ENCODE measurements at regions of chr9 and their contacts with region 1.

Region 1: DNA sequence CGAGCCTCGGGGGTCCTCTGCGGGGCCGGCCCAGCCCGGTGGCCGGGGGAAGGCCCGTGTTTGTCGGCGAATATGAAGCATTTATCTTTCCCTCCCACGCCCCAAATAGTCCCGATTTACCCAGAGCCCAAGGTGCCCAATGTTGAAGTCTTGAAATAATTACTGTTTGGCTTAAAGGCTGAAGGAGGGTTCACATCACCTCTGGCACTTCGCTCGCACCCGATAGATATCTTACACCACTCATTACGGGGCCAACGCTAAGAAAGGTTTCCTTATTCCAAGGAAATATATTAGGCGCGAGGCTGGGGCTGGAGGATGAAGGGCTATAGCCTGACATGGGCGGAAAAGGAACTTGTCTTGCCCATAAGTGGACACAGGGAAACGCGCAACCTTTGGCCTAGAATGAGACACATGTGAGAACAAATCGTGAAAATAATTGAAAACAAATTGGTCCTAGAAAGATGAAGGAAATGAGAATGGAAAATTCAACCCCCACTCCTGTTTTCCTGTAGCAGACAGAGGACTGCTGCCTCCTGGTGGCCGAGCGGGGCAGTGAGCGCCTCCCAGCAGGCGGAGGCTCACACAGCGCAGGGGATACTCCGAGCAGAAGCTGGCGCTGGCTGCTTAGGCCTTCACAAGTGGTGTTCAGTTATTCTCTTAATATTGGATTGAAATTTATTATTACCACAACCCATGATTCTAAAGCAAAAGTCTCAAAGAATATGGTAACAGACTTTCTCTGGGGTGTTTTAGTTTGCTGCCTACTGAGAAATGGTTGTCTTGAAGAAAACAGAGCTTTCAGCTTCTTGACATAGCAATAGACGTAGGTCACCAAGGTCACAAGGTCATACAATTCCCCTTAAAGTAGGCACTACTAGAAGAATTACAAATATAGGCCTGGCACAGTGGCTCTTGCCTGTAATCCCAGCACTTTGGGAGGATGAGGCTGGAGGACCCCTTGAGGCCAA is 7.9 kb downstream of the CCL21 start:
- DNase-seq: peak; percentile 93
- ATAC-seq: peak; percentile 95

Region 2: GRCh38 chr9:34384368-34385165 is 317.5 kb before region 1 on chr9:
- intact Hi-C with region 1: no loop called
- DNase-seq: no peak
- ATAC-seq: no peak

Region 3: DNA sequence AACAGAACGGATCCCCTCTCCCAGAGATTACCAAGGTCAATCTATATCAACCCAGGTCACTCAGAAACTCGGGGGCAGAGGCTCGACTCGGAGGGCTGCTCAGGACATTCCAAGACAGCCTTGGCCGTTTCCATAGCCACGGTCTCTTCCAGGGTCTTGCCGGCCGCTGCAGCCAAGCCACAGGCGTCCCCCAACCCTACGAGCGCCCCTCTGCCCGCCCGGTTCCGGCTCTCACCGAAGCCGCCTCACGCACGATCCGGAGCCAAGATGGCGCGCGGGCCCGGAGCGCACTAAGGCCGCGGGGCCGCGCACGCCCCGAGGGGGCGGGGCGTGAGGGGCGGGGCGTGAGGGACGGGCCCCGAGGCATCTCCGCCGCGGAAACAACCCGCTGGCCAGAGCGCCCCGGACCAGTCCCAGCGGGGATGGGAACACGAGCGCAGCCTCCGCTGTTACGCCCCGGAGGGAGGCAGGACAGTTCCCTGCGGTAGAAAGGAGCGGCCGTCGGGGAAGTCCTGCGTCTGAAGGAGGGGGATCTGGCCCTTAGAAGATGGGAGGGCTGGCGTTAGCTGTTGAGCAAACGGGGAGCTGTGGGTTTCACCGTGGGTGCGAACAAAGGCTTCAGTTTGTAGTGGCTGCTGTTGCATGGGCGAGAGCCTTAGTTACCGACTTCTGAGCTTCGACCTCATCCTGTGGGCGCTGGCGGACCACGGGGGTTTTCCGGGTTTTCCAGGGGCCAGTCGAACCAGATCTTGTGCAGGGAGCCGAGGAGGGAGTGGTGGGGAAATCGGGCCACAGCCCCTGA is 90.0 kb before region 1 on chr9 and contains the start of gene RPP25L:
- intact Hi-C with region 1: loop called (anchors 10 kb)
- DNase-seq: peak; percentile 92
- ATAC-seq: peak; percentile 96
- total RNA-seq, gene RPP25L: 43.4 TPM